MCF 10A (cell line): ENCODE measurements at regions of chr6 and their contacts with region 1.

Region 1: GRCh38 chr6:152301764-152302568 is 335.2 kb downstream of the SYNE1 start:
- DNase-seq: peak; percentile 88
- H3K4me3 Mint-ChIP-seq: peak overlapping the region; percentile 90
- H3K27ac Mint-ChIP-seq: peak overlapping the region; percentile 79
- H3K4me1 Mint-ChIP-seq: peaks cover 5% of the 10 kb centered on the region
- H3K27me3 Mint-ChIP-seq: no peaks in the 10 kb centered on the region
- CTCF ChIP-seq: peak; percentile 73

Region 2: DNA sequence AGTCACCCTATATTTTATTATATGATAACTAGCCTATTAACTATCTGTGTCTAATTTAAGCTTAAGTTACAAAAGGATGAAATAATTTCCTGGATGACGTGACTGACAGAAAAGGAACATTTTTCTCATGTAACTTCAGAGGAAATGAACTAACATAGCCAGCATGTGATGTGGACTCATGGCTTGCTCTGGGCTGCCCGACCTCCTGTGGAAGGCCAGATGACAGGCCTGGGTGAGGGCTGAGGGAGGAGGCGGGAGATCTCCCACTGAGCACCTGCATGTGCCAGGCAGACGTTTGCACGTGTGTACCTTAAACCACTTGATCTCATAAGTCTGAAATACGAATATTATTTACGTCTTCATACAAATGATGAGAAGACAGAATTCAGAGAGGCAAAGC is 14.1 kb after region 1 on chr6:
- CTCF ChIA-PET with region 1: interaction called, 3 read pairs
- POLR2A ChIA-PET with region 1: interaction called, 22 read pairs
- intact Hi-C with region 1: no loop called
- DNase-seq: no peak
- H3K4me3 Mint-ChIP-seq: no peak overlapping the region
- H3K27ac Mint-ChIP-seq: no peak overlapping the region
- H3K4me1 Mint-ChIP-seq: peaks cover 11% of the 10 kb centered on the region
- H3K27me3 Mint-ChIP-seq: no peaks in the 10 kb centered on the region
- CTCF ChIP-seq: no peak

Region 3: DNA sequence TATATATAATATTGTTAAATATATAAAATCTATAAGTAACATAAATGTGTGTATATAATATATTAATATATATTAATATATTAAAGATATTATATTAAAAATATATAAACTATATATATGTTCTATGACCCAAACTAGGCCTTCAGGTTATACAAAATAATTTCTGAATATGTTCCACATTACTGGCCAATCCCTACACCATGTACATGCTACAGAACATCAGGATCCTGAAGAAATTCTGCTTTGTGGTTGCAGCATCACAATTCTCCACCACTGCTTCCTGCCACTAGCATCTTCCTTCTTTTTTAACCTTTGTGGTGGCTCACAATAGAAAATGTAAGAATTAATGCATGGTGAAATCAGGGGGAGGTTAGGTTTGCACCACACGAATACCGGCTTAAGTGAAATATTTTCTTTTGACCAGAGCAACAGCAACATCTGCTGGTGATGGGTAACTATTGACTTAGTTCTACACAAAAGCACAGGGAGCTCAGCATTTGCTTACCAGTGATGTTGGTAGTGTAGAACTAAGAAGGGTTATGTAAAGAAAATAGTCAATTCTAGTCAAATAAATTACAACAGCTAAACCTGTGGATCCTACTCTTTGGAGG is 54.6 kb after region 1 on chr6:
- CTCF ChIA-PET with region 1: interaction called, 10 read pairs
- POLR2A ChIA-PET with region 1: interaction called, 8 read pairs
- intact Hi-C with region 1: no loop called
- DNase-seq: peak; percentile 48
- H3K4me3 Mint-ChIP-seq: no peak overlapping the region
- H3K27ac Mint-ChIP-seq: no peak overlapping the region
- H3K4me1 Mint-ChIP-seq: peaks cover 5% of the 10 kb centered on the region
- H3K27me3 Mint-ChIP-seq: no peaks in the 10 kb centered on the region
- CTCF ChIP-seq: peak; percentile 49